ENCODE measurements at regions of chr7 and their contacts with region 1.

Region 1: DNA sequence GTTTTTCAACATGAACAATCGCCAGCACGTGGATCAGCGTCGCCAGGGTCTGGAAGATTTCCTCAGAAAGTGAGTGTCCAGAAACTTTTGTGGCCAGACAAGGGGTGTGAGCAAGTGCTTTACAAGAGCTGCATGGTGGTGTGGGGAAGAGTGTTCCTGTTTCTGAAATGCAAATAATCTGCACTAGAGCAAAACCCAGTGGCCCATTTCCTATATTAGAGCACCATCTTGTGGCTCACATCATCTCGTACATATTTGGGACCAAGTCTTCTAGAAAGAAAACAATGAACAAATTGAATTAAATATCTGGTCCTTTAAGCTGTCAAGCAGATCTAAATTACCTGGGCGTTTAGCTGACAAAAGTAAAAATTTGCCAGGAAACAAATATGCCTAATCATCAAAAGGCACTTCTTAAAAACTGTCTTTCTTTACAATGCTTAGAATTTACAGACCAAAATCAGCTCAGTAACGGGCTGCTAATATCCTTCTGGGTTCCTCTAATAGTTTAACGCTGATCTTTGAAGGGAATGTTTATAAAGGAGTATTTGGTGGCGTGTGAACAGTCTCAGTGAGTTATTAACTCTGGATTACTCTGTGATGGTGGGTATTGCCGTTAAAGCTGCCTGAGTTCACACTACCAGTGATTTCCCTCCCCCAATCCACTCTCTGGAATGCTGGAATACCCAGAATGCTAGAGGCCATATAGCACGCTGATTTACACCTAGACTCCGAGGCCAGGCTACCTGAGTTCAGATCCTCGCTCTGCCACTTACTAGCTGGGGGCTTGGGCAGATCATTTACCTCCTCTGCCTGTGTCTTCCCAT is 73.6 kb downstream of the SNX10 start:
- DNase-seq: peak; percentile 60
- H3K4me3 ChIP-seq: no peak overlapping the region
- H3K27ac ChIP-seq: no peak overlapping the region
- H3K4me1 ChIP-seq: peaks cover 0 to 9% of the 10 kb centered on the region in 2 experiments; a peak in 2 of 4 replicates
- H3K27me3 ChIP-seq: peaks cover 22% of the 10 kb centered on the region; the same call in 1 of the 2 replicates
- CTCF ChIP-seq: peak; percentile 94
- EP300 ChIP-seq: no peak
- RAD21 ChIP-seq: peak; percentile 100

Region 2: GRCh38 chr7:25851332-25852210 is 513.7 kb before region 1 on chr7:
- CTCF ChIA-PET with region 1: interaction called, 24 read pairs
- POLR2A ChIA-PET with region 1: no interaction called
- DNase-seq: peak; percentile 81
- H3K4me3 ChIP-seq: peak overlapping the region; percentile 21 to 38; a peak in 2 of 4 replicates
- H3K27ac ChIP-seq: no peak overlapping the region
- H3K4me1 ChIP-seq: peaks cover 0 to 24% of the 10 kb centered on the region in 2 experiments; a peak in 2 of 4 replicates
- H3K27me3 ChIP-seq: peaks cover 49% of the 10 kb centered on the region
- CTCF ChIP-seq: peak; percentile 92
- EP300 ChIP-seq: no peak
- RAD21 ChIP-seq: peak; percentile 99

Region 3: GRCh38 chr7:26071622-26072456 is 293.4 kb before region 1 on chr7:
- CTCF ChIA-PET with region 1: interaction called, 12 read pairs
- POLR2A ChIA-PET with region 1: no interaction called
- DNase-seq: no peak
- H3K4me3 ChIP-seq: no peak overlapping the region
- H3K27ac ChIP-seq: no peak overlapping the region
- H3K4me1 ChIP-seq: peaks cover 0 to 8% of the 10 kb centered on the region in 2 experiments; a peak in 1 of 4 replicates
- H3K27me3 ChIP-seq: peaks cover 21% of the 10 kb centered on the region; the same call in 1 of the 2 replicates
- CTCF ChIP-seq: no peak
- EP300 ChIP-seq: no peak
- RAD21 ChIP-seq: no peak

Region 4: DNA sequence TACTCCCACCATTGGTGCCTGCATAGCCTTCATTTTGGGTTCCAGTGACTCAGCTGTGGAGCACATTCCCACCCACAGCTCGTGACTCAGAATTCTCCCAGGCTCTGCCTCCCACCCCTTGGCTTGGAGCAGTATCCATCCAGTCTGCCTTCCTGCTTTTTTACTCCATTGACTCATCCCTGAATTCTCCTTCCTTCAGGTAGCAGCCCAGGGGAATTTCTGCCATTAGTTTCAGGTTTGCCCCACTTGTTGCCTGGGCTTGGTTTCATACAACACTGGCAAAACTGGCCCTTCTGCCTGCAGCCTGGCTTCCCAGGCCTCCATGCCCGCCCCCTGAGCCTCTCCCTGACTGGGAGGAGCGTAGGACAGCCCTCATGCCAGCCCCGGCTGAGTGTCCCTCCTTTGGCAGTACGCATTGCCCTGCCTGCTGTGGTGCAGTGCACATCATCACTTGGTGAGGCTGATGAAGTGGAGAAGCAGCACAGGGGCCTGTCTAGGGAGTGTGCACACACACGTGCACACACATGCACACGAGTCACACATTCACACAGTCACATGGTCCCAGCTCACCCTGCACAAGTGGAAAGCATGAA is 18.6 kb before region 1 on chr7:
- CTCF ChIA-PET with region 1: interaction called, 26 read pairs
- POLR2A ChIA-PET with region 1: no interaction called
- DNase-seq: no peak
- H3K4me3 ChIP-seq: no peak overlapping the region
- H3K27ac ChIP-seq: no peak overlapping the region
- H3K4me1 ChIP-seq: peaks cover 0 to 3% of the 10 kb centered on the region in 2 experiments; a peak in 2 of 4 replicates
- H3K27me3 ChIP-seq: no peaks in the 10 kb centered on the region
- CTCF ChIP-seq: no peak
- EP300 ChIP-seq: no peak
- RAD21 ChIP-seq: no peak

Region 5: DNA sequence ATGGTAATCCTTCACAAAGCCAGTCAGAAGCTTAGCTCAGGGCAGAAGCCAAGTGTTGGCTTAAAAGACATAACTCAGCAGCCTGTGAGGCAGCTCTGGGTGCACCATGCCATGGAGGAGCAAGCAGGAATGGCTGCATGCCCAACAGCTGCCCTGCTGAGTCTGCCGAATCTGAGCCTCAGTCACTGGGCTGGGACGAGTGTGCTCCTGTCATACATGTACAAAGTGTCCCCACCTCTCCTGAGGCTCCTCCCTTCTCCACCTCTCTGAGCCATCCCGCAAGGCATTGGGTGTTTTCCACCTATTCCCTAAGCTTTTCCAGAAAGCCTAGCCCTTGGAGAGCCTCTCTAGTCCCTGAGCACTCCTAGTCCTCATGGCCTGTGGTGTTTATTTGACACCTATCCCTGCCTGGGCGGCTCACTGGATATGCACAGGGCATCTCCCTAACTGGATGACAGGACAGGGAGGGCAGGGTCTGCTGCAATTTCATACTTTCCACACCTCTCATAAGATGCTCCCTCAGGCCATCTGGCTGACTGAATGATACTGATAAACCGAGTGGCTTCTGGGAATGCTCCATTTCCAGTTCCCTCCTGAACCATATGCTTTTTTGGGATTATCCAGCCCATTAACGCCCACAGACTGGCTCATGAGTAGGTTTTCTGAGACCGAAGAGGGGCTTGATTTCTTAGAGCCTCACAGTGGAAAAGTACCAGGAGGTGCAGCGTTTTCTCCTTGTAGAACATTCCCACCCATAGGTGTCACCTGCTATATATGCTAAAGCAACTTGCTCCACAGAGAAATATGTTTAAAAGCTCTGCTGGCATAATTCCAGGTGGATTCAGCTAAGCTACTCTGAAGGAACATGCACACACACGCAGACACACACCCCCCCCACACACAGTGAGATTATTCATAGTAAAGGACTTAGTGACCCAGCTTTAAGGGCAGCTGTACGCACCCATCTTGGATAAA is 125.6 kb after region 1 on chr7:
- CTCF ChIA-PET with region 1: interaction called, 43 read pairs
- POLR2A ChIA-PET with region 1: no interaction called
- DNase-seq: peak; percentile 55
- H3K4me3 ChIP-seq: no peak overlapping the region
- H3K27ac ChIP-seq: no peak overlapping the region
- H3K4me1 ChIP-seq: peaks cover 0 to 27% of the 10 kb centered on the region in 2 experiments; a peak in 2 of 4 replicates
- H3K27me3 ChIP-seq: no peaks in the 10 kb centered on the region
- CTCF ChIP-seq: no peak
- EP300 ChIP-seq: no peak
- RAD21 ChIP-seq: no peak

Region 6: GRCh38 chr7:26657686-26658396 is 292.6 kb after region 1 on chr7:
- CTCF ChIA-PET with region 1: interaction called, 716 read pairs
- POLR2A ChIA-PET with region 1: no interaction called
- DNase-seq: no peak
- H3K4me3 ChIP-seq: no peak overlapping the region
- H3K27ac ChIP-seq: no peak overlapping the region
- H3K4me1 ChIP-seq: peaks cover 0 to 6% of the 10 kb centered on the region in 2 experiments; a peak in 1 of 4 replicates
- H3K27me3 ChIP-seq: no peaks in the 10 kb centered on the region; the same call in 1 of the 2 replicates
- CTCF ChIP-seq: no peak
- EP300 ChIP-seq: no peak
- RAD21 ChIP-seq: no peak

Region 7: DNA sequence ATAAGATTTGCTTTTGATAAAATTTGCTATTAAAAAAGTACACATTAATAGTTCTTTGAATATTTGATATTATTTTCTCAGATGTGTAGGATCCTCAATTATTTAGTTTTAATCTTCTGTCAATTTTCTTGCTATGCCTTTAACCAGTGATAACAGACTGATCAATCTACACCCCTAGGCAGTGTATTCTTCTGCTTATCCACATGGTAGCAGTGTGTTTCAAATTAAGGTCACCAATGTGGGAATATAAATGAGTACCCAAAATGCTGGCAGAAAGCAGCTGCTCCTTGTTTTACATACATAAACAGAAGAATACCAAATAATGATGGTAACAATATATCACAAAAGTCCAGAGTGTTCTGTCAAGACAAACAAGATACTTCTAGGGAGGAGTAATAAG is 412.1 kb after region 1 on chr7:
- CTCF ChIA-PET with region 1: no interaction called
- POLR2A ChIA-PET with region 1: no interaction called
- DNase-seq: peak; percentile 35
- H3K4me3 ChIP-seq: no peak overlapping the region
- H3K27ac ChIP-seq: no peak overlapping the region
- H3K4me1 ChIP-seq: no peaks in the 10 kb centered on the region; a peak in 1 of 4 replicates
- H3K27me3 ChIP-seq: no peaks in the 10 kb centered on the region
- CTCF ChIP-seq: no peak
- EP300 ChIP-seq: no peak
- RAD21 ChIP-seq: peak; percentile 55

Region 8: DNA sequence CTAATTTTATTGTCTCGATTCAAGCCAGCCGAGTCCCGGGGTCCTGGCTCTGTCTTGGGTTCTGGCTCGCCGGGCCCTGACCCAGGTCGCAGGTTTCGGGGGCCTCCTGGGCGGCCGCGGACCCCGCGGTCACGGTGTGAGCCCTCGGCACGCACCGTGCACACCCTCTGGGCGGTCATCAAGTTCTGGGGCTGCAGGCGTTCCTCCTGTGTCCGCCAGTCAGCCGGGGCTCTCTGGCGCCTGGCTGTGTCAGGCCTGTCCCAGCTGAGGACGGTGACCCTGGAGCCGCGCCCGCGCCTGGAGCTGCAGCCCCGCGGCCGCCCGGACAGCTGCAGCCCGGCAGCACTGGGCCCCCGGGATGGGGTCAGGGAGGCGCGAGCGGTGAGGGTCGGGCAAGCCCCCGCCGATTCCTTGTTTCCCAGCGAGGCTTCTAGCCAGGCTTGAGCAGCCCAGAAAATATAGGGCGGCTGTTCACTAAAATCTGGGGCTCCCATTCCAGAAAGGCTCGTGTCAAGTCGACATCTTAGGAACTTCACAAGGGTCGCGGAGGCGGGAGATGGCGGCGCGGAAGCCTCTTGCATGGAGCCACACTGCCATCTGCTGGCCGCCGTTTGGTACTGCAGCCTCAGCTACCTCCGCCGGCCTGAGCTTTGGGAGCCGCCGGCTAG is 795.4 kb after region 1 on chr7:
- CTCF ChIA-PET with region 1: interaction called, 31 read pairs
- POLR2A ChIA-PET with region 1: no interaction called
- DNase-seq: peak; percentile 96
- H3K4me3 ChIP-seq: peak overlapping the region; percentile 39 to 70
- H3K27ac ChIP-seq: no peak overlapping the region
- H3K4me1 ChIP-seq: peaks cover 0 to 8% of the 10 kb centered on the region in 2 experiments; a peak in 1 of 4 replicates
- H3K27me3 ChIP-seq: peaks cover 91% of the 10 kb centered on the region
- CTCF ChIP-seq: peak; percentile 99
- EP300 ChIP-seq: no peak
- RAD21 ChIP-seq: peak; percentile 94

Measured in SK-N-SH (cell line).